OCI-LY7 (cell line): ENCODE measurements at regions of chr2 and their contacts with region 1.

Region 1: GRCh38 chr2:168118733-168119514 is 128.5 kb downstream of the STK39 start:
- DNase-seq: peak; percentile 77
- H3K4me3 ChIP-seq: no peak overlapping the region
- H3K27ac ChIP-seq: no peak overlapping the region
- H3K4me1 ChIP-seq: peaks cover 11% of the 10 kb centered on the region
- CTCF ChIP-seq: peak; percentile 89

Region 2: DNA sequence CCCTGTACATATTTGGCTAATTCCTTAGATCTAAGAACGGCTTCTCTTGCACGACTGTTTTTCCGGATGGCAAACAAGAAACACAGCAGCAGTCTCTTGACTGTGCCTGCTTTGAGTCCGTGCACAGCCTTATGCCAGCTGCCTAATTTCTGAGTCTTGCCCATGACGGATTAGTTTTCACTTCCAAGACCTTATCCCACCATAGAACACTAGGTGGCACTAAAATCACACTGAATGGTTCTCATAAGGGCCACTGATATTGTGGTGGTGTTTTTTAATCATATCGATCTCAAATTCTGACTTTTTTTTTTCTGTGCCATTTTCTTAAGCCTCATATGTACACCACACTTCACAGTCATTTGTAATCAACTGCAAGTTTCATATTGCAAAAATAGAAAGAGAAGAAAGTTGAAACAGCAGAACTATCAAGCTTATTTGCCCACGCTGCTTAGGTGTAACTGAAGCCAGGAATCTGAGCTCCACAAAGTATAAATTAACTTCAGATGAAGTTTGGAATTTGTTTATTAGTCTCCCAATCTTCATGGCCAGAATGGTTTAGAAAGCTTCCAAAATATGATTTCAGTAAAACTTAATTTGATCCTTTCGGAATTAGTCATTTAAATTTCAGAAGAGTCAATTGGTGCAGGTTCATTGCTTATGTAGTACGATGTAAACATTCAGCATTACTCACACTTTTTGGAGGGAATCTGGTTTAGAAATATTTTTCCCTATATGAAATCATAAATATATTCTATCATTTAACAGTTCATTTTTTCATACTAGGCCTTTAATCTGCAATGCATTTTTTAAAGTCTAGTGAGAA is 1579.4 kb before region 1 on chr2:
- CTCF ChIA-PET with region 1: no interaction called
- POLR2A ChIA-PET with region 1: no interaction called
- intact Hi-C with region 1: loop called (anchors 2 kb)
- DNase-seq: peak; percentile 52
- H3K4me3 ChIP-seq: no peak overlapping the region
- H3K27ac ChIP-seq: no peak overlapping the region
- H3K4me1 ChIP-seq: no peaks in the 10 kb centered on the region
- CTCF ChIP-seq: peak; percentile 88

Region 3: DNA sequence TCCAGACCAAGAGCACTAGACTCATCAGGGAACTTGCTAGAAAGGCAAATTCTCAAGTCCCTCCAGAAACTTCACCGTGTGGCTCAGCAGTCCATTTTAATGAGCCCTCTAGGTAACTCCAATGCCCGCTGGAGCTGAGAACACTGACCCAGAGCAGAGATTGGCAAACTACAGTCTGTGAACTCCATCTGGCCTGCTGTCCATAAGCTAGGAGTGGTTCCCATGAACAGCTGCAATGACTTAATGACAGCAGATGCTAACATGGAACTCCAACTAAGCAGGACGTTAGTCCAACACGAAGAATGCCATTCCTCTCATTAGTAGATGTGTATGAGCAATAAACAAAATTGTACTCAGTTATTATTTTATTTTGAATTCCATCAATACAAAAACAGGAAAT is 243.4 kb before region 1 on chr2:
- CTCF ChIA-PET with region 1: no interaction called
- POLR2A ChIA-PET with region 1: no interaction called
- intact Hi-C with region 1: loop called (anchors 10 kb)
- DNase-seq: no peak
- H3K4me3 ChIP-seq: no peak overlapping the region
- H3K27ac ChIP-seq: no peak overlapping the region
- H3K4me1 ChIP-seq: no peaks in the 10 kb centered on the region
- CTCF ChIP-seq: no peak

Region 4: GRCh38 chr2:167964650-167965413 is 154.1 kb before region 1 on chr2:
- CTCF ChIA-PET with region 1: no interaction called
- POLR2A ChIA-PET with region 1: interaction called, 8 read pairs
- intact Hi-C with region 1: loop called (anchors 1 kb)
- DNase-seq: peak; percentile 21
- H3K4me3 ChIP-seq: no peak overlapping the region
- H3K27ac ChIP-seq: no peak overlapping the region
- H3K4me1 ChIP-seq: no peaks in the 10 kb centered on the region
- CTCF ChIP-seq: peak; percentile 80